ENCODE measurements at regions of chr22 and their contacts with region 1.

Region 1: GRCh38 chr22:46798366-46799350 is 36.2 kb downstream of the TBC1D22A start:
- DNase-seq: peak; percentile 55 to 83 (median 71)
- ATAC-seq: peak; percentile 87
- H3K4me3 ChIP-seq: no peak overlapping the region
- H3K4me3 Mint-ChIP-seq: no peak overlapping the region
- H3K27ac ChIP-seq: no peak overlapping the region
- H3K27ac Mint-ChIP-seq: peak overlapping the region; percentile 87
- H3K4me1 ChIP-seq: peaks cover 7% of the 10 kb centered on the region
- H3K4me1 Mint-ChIP-seq: peaks cover 26% of the 10 kb centered on the region
- H3K27me3 ChIP-seq: no peaks in the 10 kb centered on the region
- H3K27me3 Mint-ChIP-seq: no peaks in the 10 kb centered on the region
- CTCF ChIP-seq: peak; percentile 72

Region 2: GRCh38 chr22:46576556-46577367 is 221.9 kb before region 1 on chr22:
- CTCF ChIA-PET with region 1: interaction called, 5 read pairs
- POLR2A ChIA-PET with region 1: no interaction called
- intact Hi-C with region 1: loop called in 1 of 2 experiments (anchors 5 kb)
- DNase-seq: peak; percentile 24 to 88 (median 57)
- ATAC-seq: peak; percentile 79
- H3K4me3 ChIP-seq: peak overlapping the region; percentile 40 to 58
- H3K4me3 Mint-ChIP-seq: peak overlapping the region; percentile 85
- H3K27ac ChIP-seq: no peak overlapping the region
- H3K27ac Mint-ChIP-seq: peak overlapping the region; percentile 74
- H3K4me1 ChIP-seq: peaks cover 21% of the 10 kb centered on the region
- H3K4me1 Mint-ChIP-seq: peaks cover 39% of the 10 kb centered on the region
- H3K27me3 ChIP-seq: no peaks in the 10 kb centered on the region
- H3K27me3 Mint-ChIP-seq: no peaks in the 10 kb centered on the region
- CTCF ChIP-seq: no peak

Region 3: DNA sequence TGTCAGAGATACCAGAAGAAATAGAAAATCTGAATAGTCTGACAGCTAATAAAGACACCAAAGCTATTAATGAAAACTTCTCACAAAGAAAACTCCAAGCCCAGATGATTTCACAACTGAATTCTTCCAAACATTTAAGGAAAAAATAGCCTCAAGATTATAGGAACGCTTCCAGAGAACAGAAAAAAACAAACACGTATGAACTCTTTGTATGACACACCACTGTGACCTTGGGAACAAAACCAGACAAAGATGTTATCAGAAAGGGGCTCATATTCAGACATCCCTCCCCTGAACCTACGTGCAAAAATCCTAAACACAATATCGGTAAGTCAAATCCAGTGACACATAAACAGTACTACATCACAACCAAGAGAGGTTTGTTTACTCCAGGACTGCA is 84.1 kb before region 1 on chr22:
- CTCF ChIA-PET with region 1: interaction called, 10 read pairs
- POLR2A ChIA-PET with region 1: no interaction called
- intact Hi-C with region 1: no loop called
- DNase-seq: no peak
- ATAC-seq: no peak
- H3K4me3 ChIP-seq: no peak overlapping the region
- H3K4me3 Mint-ChIP-seq: no peak overlapping the region
- H3K27ac ChIP-seq: no peak overlapping the region
- H3K27ac Mint-ChIP-seq: peak overlapping the region; percentile 72
- H3K4me1 ChIP-seq: no peaks in the 10 kb centered on the region
- H3K4me1 Mint-ChIP-seq: peaks cover 10% of the 10 kb centered on the region
- H3K27me3 ChIP-seq: no peaks in the 10 kb centered on the region
- H3K27me3 Mint-ChIP-seq: no peaks in the 10 kb centered on the region
- CTCF ChIP-seq: no peak

Region 4: DNA sequence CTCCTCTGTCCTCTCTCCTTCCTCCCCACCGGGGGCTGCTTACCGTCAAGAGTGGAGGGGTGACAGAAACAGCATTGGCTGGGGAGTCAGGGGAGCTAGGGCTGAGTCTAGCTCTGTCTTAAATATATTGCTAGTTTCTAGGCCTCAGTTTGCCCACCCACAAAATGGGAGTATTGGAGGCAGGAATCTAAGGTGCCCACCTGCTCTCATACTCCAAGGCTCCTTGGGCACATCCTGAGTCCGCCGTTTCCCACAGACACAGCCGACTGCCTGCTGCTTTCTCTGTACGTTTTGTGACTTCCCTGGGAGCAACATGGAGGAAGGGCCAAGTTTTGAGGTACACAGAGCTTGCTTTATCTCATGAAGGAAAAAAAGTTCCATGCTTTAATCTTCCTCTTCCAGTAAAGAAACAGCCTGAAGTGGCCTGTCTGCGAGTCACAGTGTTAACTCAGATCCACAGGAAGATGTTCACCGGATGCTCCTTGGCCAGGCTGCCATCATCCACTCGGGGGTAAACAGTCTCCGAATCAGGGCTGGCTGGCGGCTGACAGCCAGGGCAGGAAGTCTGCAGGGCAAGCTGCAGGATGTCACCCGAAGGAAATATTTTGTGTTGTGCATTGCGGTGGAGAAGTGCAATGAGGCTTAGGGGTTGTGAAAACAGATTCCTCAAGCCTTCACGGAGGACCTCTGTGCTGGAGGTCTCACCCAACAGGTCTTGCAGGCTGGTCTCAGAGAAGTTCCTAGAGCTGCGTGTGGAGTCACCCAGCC is 49.6 kb before region 1 on chr22:
- CTCF ChIA-PET with region 1: interaction called, 13 read pairs
- POLR2A ChIA-PET with region 1: interaction called, 7 read pairs
- intact Hi-C with region 1: no loop called
- DNase-seq: peak; percentile 57 to 88 (median 80)
- ATAC-seq: peak; percentile 95
- H3K4me3 ChIP-seq: peak overlapping the region; percentile 11 to 38
- H3K4me3 Mint-ChIP-seq: peak overlapping the region; percentile 78
- H3K27ac ChIP-seq: peak overlapping the region; percentile 55 to 82
- H3K27ac Mint-ChIP-seq: peak overlapping the region; percentile 97
- H3K4me1 ChIP-seq: peaks cover 26% of the 10 kb centered on the region
- H3K4me1 Mint-ChIP-seq: peaks cover 24% of the 10 kb centered on the region
- H3K27me3 ChIP-seq: no peaks in the 10 kb centered on the region
- H3K27me3 Mint-ChIP-seq: no peaks in the 10 kb centered on the region
- CTCF ChIP-seq: no peak

Region 5: GRCh38 chr22:46774253-46774979 is 24.2 kb before region 1 on chr22:
- CTCF ChIA-PET with region 1: interaction called, 36 read pairs
- POLR2A ChIA-PET with region 1: no interaction called
- intact Hi-C with region 1: no loop called
- DNase-seq: peak in 2 of 9 experiments; percentile 21 to 48
- ATAC-seq: peak; percentile 39
- H3K4me3 ChIP-seq: no peak overlapping the region
- H3K4me3 Mint-ChIP-seq: peak overlapping the region; percentile 73
- H3K27ac ChIP-seq: peak overlapping the region; percentile 35 to 59
- H3K27ac Mint-ChIP-seq: peak overlapping the region; percentile 95
- H3K4me1 ChIP-seq: peaks cover 71% of the 10 kb centered on the region
- H3K4me1 Mint-ChIP-seq: peaks cover 76% of the 10 kb centered on the region
- H3K27me3 ChIP-seq: no peaks in the 10 kb centered on the region
- H3K27me3 Mint-ChIP-seq: no peaks in the 10 kb centered on the region
- CTCF ChIP-seq: no peak

Region 6: GRCh38 chr22:46815896-46816731 is 17.5 kb after region 1 on chr22:
- CTCF ChIA-PET with region 1: interaction called, 12 read pairs
- POLR2A ChIA-PET with region 1: no interaction called
- intact Hi-C with region 1: no loop called
- DNase-seq: no peak
- ATAC-seq: peak; percentile 48
- H3K4me3 ChIP-seq: no peak overlapping the region
- H3K4me3 Mint-ChIP-seq: no peak overlapping the region
- H3K27ac ChIP-seq: no peak overlapping the region
- H3K27ac Mint-ChIP-seq: no peak overlapping the region
- H3K4me1 ChIP-seq: no peaks in the 10 kb centered on the region
- H3K4me1 Mint-ChIP-seq: peaks cover 59% of the 10 kb centered on the region
- H3K27me3 ChIP-seq: no peaks in the 10 kb centered on the region
- H3K27me3 Mint-ChIP-seq: no peaks in the 10 kb centered on the region
- CTCF ChIP-seq: no peak